B cell (primary cell): ENCODE measurements at regions of chr3 and their contacts with region 1.

Region 1: GRCh38 chr3:63818281-63819150 is 583 bp upstream of the C3orf49 start:
- DNase-seq: peak; percentile 67
- ATAC-seq: peak; percentile 64
- H3K4me3 ChIP-seq: no peak overlapping the region
- H3K4me3 Mint-ChIP-seq: no peak overlapping the region
- H3K27ac ChIP-seq: no peak overlapping the region
- H3K27ac Mint-ChIP-seq: no peak overlapping the region
- H3K4me1 ChIP-seq: no peaks in the 10 kb centered on the region
- H3K4me1 Mint-ChIP-seq: no peaks in the 10 kb centered on the region
- H3K27me3 ChIP-seq: no peaks in the 10 kb centered on the region
- H3K27me3 Mint-ChIP-seq: no peaks in the 10 kb centered on the region
- CTCF ChIP-seq: peak; percentile 90

Region 2: DNA sequence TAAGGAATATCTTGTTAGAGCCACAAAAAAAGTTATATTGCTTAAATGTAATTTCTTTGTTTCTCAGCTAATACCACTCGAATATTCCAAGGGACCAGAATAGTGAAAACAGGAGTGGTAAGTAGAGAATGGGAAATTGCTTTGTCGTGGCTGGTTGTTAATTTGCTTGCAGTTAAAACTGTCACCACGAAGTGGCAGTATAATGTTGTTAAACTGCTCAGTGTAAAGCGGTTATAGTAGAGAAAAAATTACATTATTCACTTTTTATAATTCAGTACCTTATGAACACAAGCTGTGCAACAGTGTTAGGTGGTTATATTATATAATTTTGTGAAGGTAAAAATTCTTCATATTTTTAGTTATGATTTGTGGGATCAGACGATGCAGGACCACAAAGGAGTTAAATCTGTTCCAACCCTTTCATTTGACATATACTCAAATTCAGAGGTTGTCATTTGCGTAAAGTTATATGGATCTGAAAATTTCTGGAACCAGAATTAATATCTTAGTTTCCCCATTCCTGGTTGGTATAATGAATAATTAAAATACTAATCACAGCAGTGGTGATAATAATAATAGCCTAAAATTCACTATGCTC is 1617.0 kb before region 1 on chr3:
- CTCF ChIA-PET with region 1: interaction called, 11 read pairs
- POLR2A ChIA-PET with region 1: no interaction called
- intact Hi-C with region 1: no loop called
- DNase-seq: no peak
- ATAC-seq: no peak
- H3K4me3 ChIP-seq: no peak overlapping the region
- H3K4me3 Mint-ChIP-seq: no peak overlapping the region
- H3K27ac ChIP-seq: no peak overlapping the region
- H3K27ac Mint-ChIP-seq: no peak overlapping the region
- H3K4me1 ChIP-seq: no peaks in the 10 kb centered on the region
- H3K4me1 Mint-ChIP-seq: no peaks in the 10 kb centered on the region
- H3K27me3 ChIP-seq: peaks cover 0 to 4% (median 0%) of the 10 kb centered on the region in 4 experiments
- H3K27me3 Mint-ChIP-seq: no peaks in the 10 kb centered on the region
- CTCF ChIP-seq: peak; percentile 44

Region 3: GRCh38 chr3:63351236-63351716 is 467.2 kb before region 1 on chr3:
- CTCF ChIA-PET with region 1: interaction called, 14 read pairs
- POLR2A ChIA-PET with region 1: no interaction called
- intact Hi-C with region 1: no loop called
- DNase-seq: peak; percentile 31
- ATAC-seq: peak; percentile 51
- H3K4me3 ChIP-seq: no peak overlapping the region
- H3K4me3 Mint-ChIP-seq: no peak overlapping the region
- H3K27ac ChIP-seq: no peak overlapping the region
- H3K27ac Mint-ChIP-seq: no peak overlapping the region
- H3K4me1 ChIP-seq: no peaks in the 10 kb centered on the region
- H3K4me1 Mint-ChIP-seq: no peaks in the 10 kb centered on the region
- H3K27me3 ChIP-seq: no peaks in the 10 kb centered on the region
- H3K27me3 Mint-ChIP-seq: peaks cover 26% of the 10 kb centered on the region
- CTCF ChIP-seq: peak; percentile 75

Region 4: GRCh38 chr3:63874769-63875168 is 56.3 kb after region 1 on chr3:
- CTCF ChIA-PET with region 1: interaction called, 11 read pairs
- POLR2A ChIA-PET with region 1: no interaction called
- intact Hi-C with region 1: no loop called
- DNase-seq: no peak
- ATAC-seq: no peak
- H3K4me3 ChIP-seq: no peak overlapping the region
- H3K4me3 Mint-ChIP-seq: no peak overlapping the region
- H3K27ac ChIP-seq: no peak overlapping the region
- H3K27ac Mint-ChIP-seq: no peak overlapping the region
- H3K4me1 ChIP-seq: peaks cover 14 to 19% of the 10 kb centered on the region in 2 donors
- H3K4me1 Mint-ChIP-seq: peaks cover 62% of the 10 kb centered on the region
- H3K27me3 ChIP-seq: no peaks in the 10 kb centered on the region
- H3K27me3 Mint-ChIP-seq: no peaks in the 10 kb centered on the region
- CTCF ChIP-seq: no peak

Region 5: DNA sequence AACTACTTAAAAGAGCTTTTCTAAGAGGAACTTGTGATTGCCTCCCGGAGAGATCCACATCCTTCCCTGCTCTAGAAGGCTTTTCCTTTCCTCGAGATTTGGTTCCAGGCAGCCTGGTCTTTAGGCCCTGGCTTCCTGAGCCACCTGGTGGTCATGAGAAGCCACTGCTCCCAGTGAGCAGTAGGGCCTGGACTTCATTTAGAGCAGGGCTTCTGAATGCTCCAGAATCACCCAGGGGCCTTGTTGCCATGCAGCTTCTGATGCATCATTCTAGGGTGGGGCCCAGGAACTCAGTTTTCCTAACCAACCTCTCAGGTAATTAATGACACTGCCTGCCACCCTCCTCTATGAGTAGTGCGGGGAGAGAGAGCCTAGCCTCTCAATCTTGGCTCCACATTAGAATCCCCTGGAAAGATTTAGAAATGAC is 175.2 kb after region 1 on chr3:
- CTCF ChIA-PET with region 1: interaction called, 15 read pairs
- POLR2A ChIA-PET with region 1: no interaction called
- intact Hi-C with region 1: no loop called
- DNase-seq: peak; percentile 60
- ATAC-seq: peak; percentile 75
- H3K4me3 ChIP-seq: no peak overlapping the region
- H3K4me3 Mint-ChIP-seq: no peak overlapping the region
- H3K27ac ChIP-seq: no peak overlapping the region
- H3K27ac Mint-ChIP-seq: no peak overlapping the region
- H3K4me1 ChIP-seq: no peaks in the 10 kb centered on the region
- H3K4me1 Mint-ChIP-seq: no peaks in the 10 kb centered on the region
- H3K27me3 ChIP-seq: no peaks in the 10 kb centered on the region
- H3K27me3 Mint-ChIP-seq: no peaks in the 10 kb centered on the region
- CTCF ChIP-seq: peak; percentile 96

Region 6: GRCh38 chr3:64203216-64203615 is 384.7 kb after region 1 on chr3:
- CTCF ChIA-PET with region 1: no interaction called
- POLR2A ChIA-PET with region 1: no interaction called
- intact Hi-C with region 1: no loop called
- DNase-seq: no peak
- ATAC-seq: no peak
- H3K4me3 ChIP-seq: no peak overlapping the region
- H3K4me3 Mint-ChIP-seq: no peak overlapping the region
- H3K27ac ChIP-seq: no peak overlapping the region
- H3K27ac Mint-ChIP-seq: no peak overlapping the region
- H3K4me1 ChIP-seq: no peaks in the 10 kb centered on the region
- H3K4me1 Mint-ChIP-seq: no peaks in the 10 kb centered on the region
- H3K27me3 ChIP-seq: no peaks in the 10 kb centered on the region
- H3K27me3 Mint-ChIP-seq: peaks cover 3% of the 10 kb centered on the region
- CTCF ChIP-seq: no peak